ENCODE measurements at regions of chr16 and their contacts with region 1.

Region 1: GRCh38 chr16:81729451-81729850 is 49.6 kb upstream of the PLCG2 start:
- DNase-seq: no peak
- H3K4me3 ChIP-seq: no peak overlapping the region
- H3K27ac ChIP-seq: no peak overlapping the region
- H3K4me1 ChIP-seq: peaks cover 6% of the 10 kb centered on the region
- H3K27me3 ChIP-seq: no peaks in the 10 kb centered on the region
- CTCF ChIP-seq: no peak

Region 2: DNA sequence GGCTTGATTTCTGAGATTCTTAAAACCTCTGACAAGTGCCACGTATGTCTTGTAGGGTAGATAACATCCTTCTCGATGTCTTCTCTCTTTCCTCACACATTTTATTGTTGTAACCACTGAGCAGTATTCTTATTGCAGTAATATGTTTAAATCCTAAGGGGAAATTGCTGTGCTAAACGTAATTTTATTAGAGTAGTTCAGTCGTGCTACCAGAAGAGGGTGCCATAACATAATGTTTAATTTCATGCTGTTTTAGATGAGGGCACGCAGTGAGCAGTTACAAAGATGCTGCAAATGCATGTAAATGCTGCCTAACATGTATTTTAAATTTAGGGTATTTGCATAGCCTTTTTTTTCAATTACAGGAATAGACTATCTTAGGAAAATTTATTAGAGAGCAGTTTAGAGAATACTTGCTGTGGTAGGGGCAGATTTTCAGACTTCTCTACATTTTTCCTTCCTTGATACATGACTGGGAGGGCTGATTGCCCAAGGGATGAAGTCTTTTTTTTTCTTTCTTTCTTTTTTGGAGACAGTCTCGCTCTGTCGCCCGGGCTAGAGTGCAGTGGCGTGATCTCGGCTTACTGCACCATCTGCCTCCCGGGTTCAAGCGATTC is 363.0 kb before region 1 on chr16:
- intact Hi-C with region 1: loop called (anchors 5 kb)
- DNase-seq: no peak
- H3K4me3 ChIP-seq: no peak overlapping the region
- H3K27ac ChIP-seq: no peak overlapping the region
- H3K4me1 ChIP-seq: no peaks in the 10 kb centered on the region
- H3K27me3 ChIP-seq: no peaks in the 10 kb centered on the region
- CTCF ChIP-seq: peak; percentile 60

Region 3: GRCh38 chr16:81618641-81619040 is 110.8 kb before region 1 on chr16:
- intact Hi-C with region 1: no loop called
- DNase-seq: no peak
- H3K4me3 ChIP-seq: no peak overlapping the region
- H3K27ac ChIP-seq: no peak overlapping the region
- H3K4me1 ChIP-seq: peaks cover 5% of the 10 kb centered on the region
- H3K27me3 ChIP-seq: no peaks in the 10 kb centered on the region
- CTCF ChIP-seq: no peak

Region 4: GRCh38 chr16:81668243-81669097 is 61.0 kb before region 1 on chr16:
- intact Hi-C with region 1: no loop called
- DNase-seq: no peak
- H3K4me3 ChIP-seq: no peak overlapping the region
- H3K27ac ChIP-seq: no peak overlapping the region
- H3K4me1 ChIP-seq: no peaks in the 10 kb centered on the region
- H3K27me3 ChIP-seq: no peaks in the 10 kb centered on the region
- CTCF ChIP-seq: no peak

Region 5: GRCh38 chr16:81680444-81681275 is 48.8 kb before region 1 on chr16:
- intact Hi-C with region 1: no loop called
- DNase-seq: no peak
- H3K4me3 ChIP-seq: no peak overlapping the region
- H3K27ac ChIP-seq: no peak overlapping the region
- H3K4me1 ChIP-seq: no peaks in the 10 kb centered on the region
- H3K27me3 ChIP-seq: no peaks in the 10 kb centered on the region
- CTCF ChIP-seq: no peak

Region 6: DNA sequence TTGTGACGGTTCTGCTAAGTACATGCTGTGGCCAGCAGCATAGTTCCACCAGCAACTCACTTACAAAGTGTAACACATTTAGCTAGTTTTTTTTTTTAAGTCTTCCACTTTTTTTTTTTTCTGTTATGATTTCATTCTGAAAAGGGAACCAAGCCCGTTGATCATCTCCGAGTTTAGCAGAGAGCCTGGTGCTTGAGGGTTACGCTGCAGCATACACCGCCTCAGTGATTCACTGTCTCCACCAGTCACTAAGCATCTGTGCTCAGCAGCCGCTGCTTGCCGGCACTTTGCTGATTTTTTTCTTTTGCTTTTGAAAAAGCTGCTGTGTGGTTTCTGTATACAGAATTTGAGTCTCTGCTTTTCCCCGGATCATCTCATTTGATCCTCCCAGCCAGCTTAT is 702.8 kb after region 1 on chr16:
- intact Hi-C with region 1: no loop called
- DNase-seq: no peak
- H3K4me3 ChIP-seq: no peak overlapping the region
- H3K27ac ChIP-seq: no peak overlapping the region
- H3K4me1 ChIP-seq: no peaks in the 10 kb centered on the region
- H3K27me3 ChIP-seq: no peaks in the 10 kb centered on the region
- CTCF ChIP-seq: no peak